GM12878 (cell line): ENCODE measurements at regions of chr3 and their contacts with region 1.

Region 1: GRCh38 chr3:72496051-72496670 is 352.1 kb downstream of the SHQ1 start:
- DNase-seq: no peak
- ATAC-seq: peak; percentile 90
- H3K4me3 ChIP-seq: no peak overlapping the region
- H3K27ac ChIP-seq: peak overlapping the region; percentile 33; the same call in 1 of the 2 replicates
- H3K4me1 ChIP-seq: 0 out of 2 replicates have a peak, but pooled peaks cover 4% of the 10 kb centered on the region
- H3K27me3 ChIP-seq: no peaks in the 10 kb centered on the region
- CTCF ChIP-seq: no peak
- EP300 ChIP-seq: 0 out of 4 replicates have a peak, but pooled peaks of 1 of the 2 experiments have one; percentile 6
- POLR2A ChIP-seq: no peak
- RAD21 ChIP-seq: no peak

Region 2: DNA sequence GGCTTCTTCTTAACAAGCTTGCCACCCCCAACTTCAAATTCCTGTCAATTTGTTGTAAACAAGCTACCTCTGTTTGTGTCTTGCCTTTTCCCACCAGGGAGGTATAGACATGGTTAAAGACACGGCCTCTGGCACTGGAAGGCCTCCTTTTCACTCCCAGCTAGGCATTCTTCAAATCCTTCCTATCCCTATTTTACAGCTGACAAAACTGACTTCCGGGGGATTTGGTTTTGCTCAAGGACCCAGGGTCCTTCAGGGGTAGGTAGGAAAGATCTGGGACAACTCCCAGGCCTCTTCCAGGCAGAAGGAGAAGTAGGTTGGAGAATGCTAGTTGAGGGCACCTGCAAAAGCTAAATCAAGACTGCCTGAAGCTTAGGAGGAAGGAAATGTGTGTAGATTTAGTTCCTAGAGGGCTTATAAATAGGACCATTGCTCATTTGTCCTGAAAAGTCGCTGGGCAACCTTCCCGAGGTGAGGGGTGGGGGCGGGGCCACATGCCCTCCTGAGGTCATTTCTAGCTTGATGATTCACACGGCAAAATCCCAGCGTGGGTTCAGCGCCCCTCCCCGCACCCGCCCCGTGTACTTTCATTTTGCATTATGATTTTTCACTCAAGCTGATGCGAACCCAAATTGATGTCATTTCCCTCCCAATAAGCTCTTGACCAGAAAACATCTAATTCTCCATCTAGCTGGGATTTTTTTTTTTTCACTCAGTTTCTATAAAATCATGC is 13.4 kb before region 1 on chr3:
- CTCF ChIA-PET with region 1: interaction called, 3 read pairs
- POLR2A ChIA-PET with region 1: interaction called, 11 read pairs
- RAD21 ChIA-PET with region 1: interaction called, 13 read pairs
- SMC1A ChIA-PET with region 1: interaction called, 5 read pairs
- in situ Hi-C with region 1: no loop called
- intact Hi-C with region 1: no loop called
- DNase-seq: peak; percentile 48
- ATAC-seq: peak; percentile 75
- H3K4me3 ChIP-seq: 0 out of 2 replicates have a peak overlapping the region, but pooled peaks have one; percentile 2
- H3K27ac ChIP-seq: peak overlapping the region; percentile 60
- H3K4me1 ChIP-seq: peaks cover 20% of the 10 kb centered on the region
- H3K27me3 ChIP-seq: no peaks in the 10 kb centered on the region
- CTCF ChIP-seq: no peak
- EP300 ChIP-seq: peak in 1 of 2 experiments; percentile 52; a peak in 1 of 4 replicates
- POLR2A ChIP-seq: no peak
- RAD21 ChIP-seq: no peak